PC-3 (cell line): ENCODE measurements at regions of chr12 and their contacts with region 1.

Region 1: GRCh38 chr12:43349863-43350262 is 202.1 kb downstream of the ADAMTS20 start:
- DNase-seq: peak; percentile 62
- ATAC-seq: peak; percentile 33; the same call in 1 of the 2 replicates
- H3K4me3 ChIP-seq: no peak overlapping the region
- H3K27ac ChIP-seq: no peak overlapping the region
- H3K4me1 ChIP-seq: no peaks in the 10 kb centered on the region
- H3K27me3 ChIP-seq: no peaks in the 10 kb centered on the region
- CTCF ChIP-seq: peak; percentile 80

Region 2: DNA sequence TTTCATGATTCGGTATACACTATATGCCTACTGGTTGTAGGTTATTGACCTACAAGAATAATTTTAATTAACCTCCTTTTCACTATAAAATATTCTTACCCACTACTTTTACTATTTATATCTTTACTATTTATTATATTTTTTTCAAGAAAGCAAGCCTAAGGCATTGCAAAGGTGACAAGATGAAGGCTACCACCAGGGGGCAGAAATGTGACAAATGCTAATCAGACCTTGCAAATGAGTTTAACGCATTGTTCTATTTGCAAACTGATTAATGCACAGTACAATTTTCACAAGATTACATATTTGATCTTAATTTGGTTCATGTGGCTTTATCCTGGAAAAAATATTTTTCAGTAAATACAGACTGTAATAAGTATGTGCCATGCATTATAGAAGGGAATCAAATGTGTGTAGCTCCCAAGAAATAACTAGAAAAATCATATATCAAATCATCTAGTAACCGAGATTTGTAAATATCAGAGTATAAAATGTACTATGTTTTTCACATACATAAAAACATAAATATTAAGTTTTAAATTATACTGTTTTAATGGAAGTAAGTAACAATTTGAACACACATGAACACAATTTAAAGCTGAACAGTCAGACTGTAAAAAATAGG is 95.2 kb after region 1 on chr12:
- CTCF ChIA-PET with region 1: no interaction called
- POLR2A ChIA-PET with region 1: no interaction called
- intact Hi-C with region 1: loop called (anchors 2 kb)
- DNase-seq: peak; percentile 74
- ATAC-seq: peak; percentile 54; the same call in 1 of the 2 replicates
- H3K4me3 ChIP-seq: no peak overlapping the region
- H3K27ac ChIP-seq: no peak overlapping the region
- H3K4me1 ChIP-seq: no peaks in the 10 kb centered on the region
- H3K27me3 ChIP-seq: no peaks in the 10 kb centered on the region
- CTCF ChIP-seq: peak; percentile 82

Region 3: DNA sequence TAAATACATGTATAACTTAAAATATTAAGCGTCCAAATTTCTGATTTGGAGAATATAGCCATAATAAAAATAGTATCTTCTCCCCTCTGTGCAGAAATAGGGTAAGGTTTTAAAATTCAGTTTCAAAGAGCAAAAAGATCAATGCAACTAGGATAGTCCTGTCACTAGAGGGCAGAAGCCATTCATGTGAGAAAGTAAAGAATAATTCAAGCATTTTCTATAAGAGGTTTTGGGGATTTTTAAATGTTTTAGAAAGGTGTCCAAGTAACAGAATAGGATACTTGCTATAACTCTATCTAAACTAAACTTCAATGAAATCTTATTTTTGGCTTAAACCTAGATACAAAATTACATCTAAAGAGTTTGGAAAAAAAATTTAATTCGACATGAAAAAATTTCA is 151.8 kb after region 1 on chr12:
- CTCF ChIA-PET with region 1: no interaction called
- POLR2A ChIA-PET with region 1: no interaction called
- intact Hi-C with region 1: loop called (anchors 2 kb)
- DNase-seq: peak; percentile 47
- ATAC-seq: no peak
- H3K4me3 ChIP-seq: no peak overlapping the region
- H3K27ac ChIP-seq: no peak overlapping the region
- H3K4me1 ChIP-seq: no peaks in the 10 kb centered on the region
- H3K27me3 ChIP-seq: no peaks in the 10 kb centered on the region; the same call in 1 of the 2 replicates
- CTCF ChIP-seq: peak; percentile 85

Region 4: GRCh38 chr12:43676183-43676813 is 326.4 kb after region 1 on chr12:
- CTCF ChIA-PET with region 1: no interaction called
- POLR2A ChIA-PET with region 1: no interaction called
- intact Hi-C with region 1: loop called (anchors 5 kb)
- DNase-seq: peak; percentile 60
- ATAC-seq: no peak; the same call in 1 of the 2 replicates
- H3K4me3 ChIP-seq: no peak overlapping the region
- H3K27ac ChIP-seq: no peak overlapping the region
- H3K4me1 ChIP-seq: no peaks in the 10 kb centered on the region
- H3K27me3 ChIP-seq: peaks cover 38% of the 10 kb centered on the region
- CTCF ChIP-seq: peak; percentile 69

Region 5: DNA sequence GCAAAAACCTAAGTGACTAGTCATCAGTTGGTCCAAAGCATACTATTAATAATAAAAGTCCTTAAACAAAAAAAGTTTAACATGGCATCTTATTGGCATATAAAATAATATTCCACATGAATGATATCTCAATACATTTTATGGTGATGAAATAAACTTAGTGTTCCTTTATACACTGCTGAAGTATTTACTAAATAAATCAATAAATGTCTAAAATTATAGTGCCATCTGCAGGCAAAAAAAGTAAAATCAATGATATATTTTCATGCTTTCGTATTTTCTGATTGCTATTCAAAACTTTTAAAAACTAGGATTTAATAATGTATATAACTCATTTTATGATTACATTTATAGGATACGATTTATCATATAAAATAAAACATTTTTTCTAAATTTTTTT is 378.3 kb after region 1 on chr12:
- CTCF ChIA-PET with region 1: no interaction called
- POLR2A ChIA-PET with region 1: no interaction called
- intact Hi-C with region 1: loop called (anchors 1 kb)
- DNase-seq: peak; percentile 49
- ATAC-seq: no peak
- H3K4me3 ChIP-seq: no peak overlapping the region
- H3K27ac ChIP-seq: no peak overlapping the region
- H3K4me1 ChIP-seq: no peaks in the 10 kb centered on the region
- H3K27me3 ChIP-seq: no peaks in the 10 kb centered on the region
- CTCF ChIP-seq: peak; percentile 54

Region 6: DNA sequence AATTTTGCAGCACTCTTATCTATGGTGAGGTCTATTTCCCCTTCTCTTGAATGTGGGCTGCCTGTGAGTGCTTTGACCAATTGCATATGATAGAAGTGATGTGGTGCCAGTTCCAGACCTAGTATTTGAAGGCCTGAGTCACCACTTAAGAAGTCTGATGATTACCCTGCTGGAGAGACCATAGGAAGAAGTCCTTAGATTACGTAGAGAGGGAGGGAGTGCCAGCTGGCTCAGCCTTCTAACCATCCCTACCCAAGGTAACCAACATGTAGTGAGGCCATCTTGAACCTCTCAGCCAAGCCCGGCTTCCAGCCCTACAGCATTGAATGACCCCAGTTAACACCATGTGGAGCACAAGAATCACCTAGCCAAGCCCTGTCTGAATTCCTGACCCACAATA is 1359.3 kb after region 1 on chr12:
- CTCF ChIA-PET with region 1: no interaction called
- POLR2A ChIA-PET with region 1: interaction called, 13 read pairs
- intact Hi-C with region 1: no loop called
- DNase-seq: peak; percentile 2
- ATAC-seq: no peak
- H3K4me3 ChIP-seq: no peak overlapping the region
- H3K27ac ChIP-seq: no peak overlapping the region
- H3K4me1 ChIP-seq: no peaks in the 10 kb centered on the region
- H3K27me3 ChIP-seq: 0 out of 2 replicates have a peak, but pooled peaks cover 10% of the 10 kb centered on the region
- CTCF ChIP-seq: no peak